Activated naive CD4-positive, alpha-beta T cell treated with anti-CD3 and anti-CD28 coated beads for 36 hours (primary cell): ENCODE measurements at regions of chr10 and their contacts with region 1.

Region 1: GRCh38 chr10:22682237-22683139 is 31.9 kb downstream of the PIP4K2A start:
- DNase-seq: peak; percentile 73
- H3K4me3 Mint-ChIP-seq: peak overlapping the region; percentile 60
- H3K27ac Mint-ChIP-seq: peak overlapping the region; percentile 97
- H3K4me1 Mint-ChIP-seq: peaks cover 86% of the 10 kb centered on the region
- H3K27me3 Mint-ChIP-seq: no peaks in the 10 kb centered on the region

Region 2: DNA sequence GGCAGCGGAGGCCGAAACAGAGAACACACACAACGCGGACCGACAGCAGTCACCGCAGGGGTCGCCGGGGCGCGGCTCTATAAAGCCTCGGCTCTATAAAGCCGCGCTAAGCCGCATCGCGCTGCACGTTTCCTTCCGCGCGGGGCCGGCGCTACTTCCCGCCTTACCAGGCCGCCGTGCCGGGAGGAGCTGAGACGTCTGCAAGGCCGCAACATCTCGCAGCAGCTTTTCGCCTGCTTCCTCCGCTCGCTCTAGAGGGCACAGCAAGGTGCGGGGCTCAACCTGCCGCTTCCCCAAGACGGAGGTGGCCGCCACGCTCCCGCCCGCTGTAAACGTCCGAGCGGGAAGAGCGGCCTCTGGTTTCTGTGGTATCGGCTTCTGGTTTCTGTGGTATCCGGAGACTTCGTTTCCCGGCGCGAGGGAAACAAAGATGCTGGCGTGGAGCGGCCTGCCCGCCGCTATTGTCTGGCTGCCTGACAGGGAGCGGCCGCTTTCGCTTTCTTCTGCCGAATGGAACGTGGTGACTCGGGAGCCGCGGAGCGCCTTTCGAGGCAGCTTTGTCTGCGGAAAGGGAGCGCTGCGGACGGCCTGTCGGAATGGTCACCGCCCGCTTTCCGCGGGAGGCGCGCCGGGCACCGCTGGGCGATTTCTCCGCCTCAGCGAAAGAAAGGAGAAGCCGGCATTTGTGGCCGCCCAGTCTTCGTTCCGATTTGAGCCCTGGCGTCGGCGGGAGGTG is 245.4 kb before region 1 on chr10:
- CTCF ChIA-PET with region 1: no interaction called
- intact Hi-C with region 1: loop called (anchors 10 kb)
- DNase-seq: peak; percentile 84
- H3K4me3 Mint-ChIP-seq: peak overlapping the region; percentile 84
- H3K27ac Mint-ChIP-seq: peak overlapping the region; percentile 92
- H3K4me1 Mint-ChIP-seq: peaks cover 31% of the 10 kb centered on the region
- H3K27me3 Mint-ChIP-seq: no peaks in the 10 kb centered on the region

Region 3: GRCh38 chr10:22611425-22612115 is 70.9 kb before region 1 on chr10:
- CTCF ChIA-PET with region 1: no interaction called
- intact Hi-C with region 1: loop called (anchors 1 kb)
- DNase-seq: peak; percentile 78
- H3K4me3 Mint-ChIP-seq: peak overlapping the region; percentile 41
- H3K27ac Mint-ChIP-seq: peak overlapping the region; percentile 79
- H3K4me1 Mint-ChIP-seq: peaks cover 86% of the 10 kb centered on the region
- H3K27me3 Mint-ChIP-seq: no peaks in the 10 kb centered on the region

Region 4: DNA sequence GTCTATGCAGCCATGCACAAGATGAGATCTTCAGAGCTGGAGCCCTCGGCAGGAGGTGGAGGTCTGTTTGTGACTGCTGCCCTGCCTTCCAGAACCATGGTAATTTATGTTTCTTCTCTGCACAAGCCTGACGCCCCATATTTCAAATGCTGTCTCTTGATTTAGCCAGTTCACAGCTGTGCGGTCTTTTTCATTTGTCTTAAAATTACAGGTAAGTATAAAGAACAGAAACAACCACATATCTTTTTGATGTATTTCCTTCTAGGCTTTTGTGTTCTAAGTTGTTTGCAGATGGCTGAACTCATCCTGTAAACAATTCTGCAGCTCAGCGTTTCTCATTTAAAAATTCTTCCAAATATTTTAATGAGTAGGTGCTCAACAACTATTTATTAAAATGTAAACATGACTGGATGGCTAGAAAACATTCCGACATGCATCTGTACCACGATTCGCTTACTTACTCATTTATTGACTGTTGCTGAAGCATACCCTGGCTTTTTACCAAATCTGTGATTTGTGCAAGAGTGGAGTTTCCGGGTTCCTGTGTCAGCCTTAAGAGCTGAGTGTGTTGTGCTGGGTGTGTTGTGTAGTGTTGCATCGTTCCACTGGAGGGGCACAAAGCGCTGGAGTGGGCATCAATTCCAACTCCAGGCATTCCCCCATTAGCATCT is 27.0 kb before region 1 on chr10:
- CTCF ChIA-PET with region 1: interaction called, 4 read pairs
- intact Hi-C with region 1: loop called (anchors 1 kb)
- DNase-seq: peak; percentile 69
- H3K4me3 Mint-ChIP-seq: peak overlapping the region; percentile 46
- H3K27ac Mint-ChIP-seq: peak overlapping the region; percentile 89
- H3K4me1 Mint-ChIP-seq: peaks cover 99% of the 10 kb centered on the region
- H3K27me3 Mint-ChIP-seq: no peaks in the 10 kb centered on the region

Region 5: DNA sequence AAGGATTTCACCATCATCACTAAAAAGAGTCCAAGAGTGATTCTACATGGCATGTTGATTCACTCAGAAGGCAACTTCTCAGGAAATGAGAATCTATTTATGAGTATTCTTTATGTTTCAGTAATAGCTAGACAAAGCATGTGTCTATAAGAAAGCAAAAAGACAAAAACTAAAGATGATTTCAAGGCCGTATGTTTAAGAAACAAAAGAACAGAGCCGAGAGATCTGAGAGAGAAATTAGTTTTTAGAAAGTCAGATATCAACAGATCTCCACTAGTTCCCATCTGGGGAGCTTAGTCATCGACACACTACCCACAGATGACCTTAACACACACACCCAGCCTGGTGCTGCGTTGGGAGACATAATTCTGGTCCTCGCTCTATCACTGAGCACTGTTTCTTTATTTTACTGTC is 10.9 kb after region 1 on chr10:
- CTCF ChIA-PET with region 1: interaction called, 4 read pairs
- intact Hi-C with region 1: loop called (anchors 1 kb)
- DNase-seq: peak; percentile 42
- H3K4me3 Mint-ChIP-seq: peak overlapping the region; percentile 25
- H3K27ac Mint-ChIP-seq: peak overlapping the region; percentile 85
- H3K4me1 Mint-ChIP-seq: peaks cover 84% of the 10 kb centered on the region
- H3K27me3 Mint-ChIP-seq: no peaks in the 10 kb centered on the region

Region 6: GRCh38 chr10:23053036-23053435 is 370.5 kb after region 1 on chr10:
- CTCF ChIA-PET with region 1: no interaction called
- intact Hi-C with region 1: no loop called
- DNase-seq: no peak
- H3K4me3 Mint-ChIP-seq: no peak overlapping the region
- H3K27ac Mint-ChIP-seq: no peak overlapping the region
- H3K4me1 Mint-ChIP-seq: no peaks in the 10 kb centered on the region
- H3K27me3 Mint-ChIP-seq: peaks cover 7% of the 10 kb centered on the region

Region 7: GRCh38 chr10:23095404-23095965 is 413.0 kb after region 1 on chr10 and contains the start of gene MSRB2:
- CTCF ChIA-PET with region 1: no interaction called
- intact Hi-C with region 1: loop called (anchors 10 kb)
- DNase-seq: peak; percentile 92
- H3K4me3 Mint-ChIP-seq: peak within 1 kb of the TSS; percentile 97
- H3K27ac Mint-ChIP-seq: peak within 1 kb of the TSS; percentile 90
- H3K4me1 Mint-ChIP-seq: peaks cover 34% of the 10 kb centered on the region
- H3K27me3 Mint-ChIP-seq: no peaks in the 10 kb centered on the region
- total RNA-seq, gene MSRB2: 13.9 to 16.0 TPM